H1 (cell line): ENCODE measurements at regions of chr1 and their contacts with region 1.

Region 1: DNA sequence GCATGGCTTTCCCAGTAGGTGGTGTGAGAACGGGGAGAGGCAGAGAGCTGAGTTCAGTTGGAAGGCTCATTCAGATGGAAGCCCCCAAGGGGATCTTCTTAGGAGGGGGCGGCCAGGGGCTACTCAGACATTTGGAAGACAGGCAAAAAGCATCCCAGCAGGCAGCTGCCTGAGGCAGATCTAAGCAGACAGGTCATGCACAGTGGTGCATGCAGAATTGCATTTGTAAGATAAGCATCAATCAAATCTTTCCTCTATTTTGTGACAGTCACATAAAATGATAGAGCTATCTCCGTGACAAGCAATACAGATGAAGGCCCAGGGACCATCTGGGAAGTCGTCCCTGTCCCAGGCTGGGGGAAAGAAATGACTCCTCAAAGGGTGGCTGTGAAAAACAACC is 3.8 kb downstream of the RAB3B start:
- DNase-seq: no peak
- H3K4me3 ChIP-seq: no peak overlapping the region
- H3K27ac ChIP-seq: no peak overlapping the region
- H3K4me1 ChIP-seq: peaks cover 1 to 9% (median 6%) of the 10 kb centered on the region in 4 experiments; a peak in 6 of 7 replicates
- H3K27me3 ChIP-seq: no peaks in the 10 kb centered on the region; a peak in 1 of 7 replicates
- CTCF ChIP-seq: no peak
- EP300 ChIP-seq: no peak
- POLR2A ChIP-seq: no peak
- RAD21 ChIP-seq: no peak

Region 2: DNA sequence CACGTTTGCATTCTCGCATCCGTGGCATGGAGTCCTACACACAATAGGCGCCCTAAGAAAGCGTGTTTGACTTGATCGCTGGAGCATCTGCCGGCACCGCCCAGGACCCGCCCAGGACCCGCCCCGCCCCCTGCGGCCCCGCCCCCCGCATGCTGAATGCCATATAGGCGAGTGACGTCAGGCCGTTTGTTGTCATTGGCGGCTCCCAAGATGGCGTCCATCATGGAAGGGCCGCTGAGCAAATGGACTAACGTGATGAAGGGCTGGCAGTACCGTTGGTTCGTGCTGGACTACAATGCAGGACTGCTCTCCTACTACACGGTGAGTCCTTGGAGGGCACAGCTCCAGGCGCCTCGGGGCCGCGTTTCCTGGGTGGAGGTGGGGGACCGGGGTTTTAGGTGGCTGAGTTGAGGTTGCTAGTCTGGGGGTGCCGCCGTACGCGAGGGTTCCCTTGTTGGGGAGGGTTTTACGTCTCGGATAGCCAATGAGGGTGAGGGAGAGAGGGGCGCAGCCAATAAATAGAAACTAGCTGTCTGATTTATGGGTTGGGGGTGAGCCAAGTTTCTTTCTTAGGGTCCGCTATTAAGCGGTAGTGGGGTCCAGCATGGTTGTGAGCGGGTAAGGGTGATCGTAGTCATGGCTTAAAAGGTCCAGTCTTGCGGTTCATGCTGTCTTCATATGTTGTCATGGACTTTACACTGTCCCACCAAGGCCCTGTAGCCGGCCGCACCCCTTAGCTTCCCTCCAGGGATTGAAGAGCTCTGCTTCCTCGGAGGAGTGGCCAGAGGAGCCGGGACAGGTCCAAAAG is 369.6 kb before region 1 on chr1 and contains the start of gene OSBPL9:
- CTCF ChIA-PET with region 1: no interaction called
- POLR2A ChIA-PET with region 1: no interaction called
- DNase-seq: peak; percentile 39 to 90
- H3K4me3 ChIP-seq: peak within 1 kb of the TSS; percentile 96 to 100 (median 100)
- H3K27ac ChIP-seq: peak within 1 kb of the TSS; percentile 97
- H3K4me1 ChIP-seq: peaks cover 0 to 3% (median 1%) of the 10 kb centered on the region in 4 experiments; a peak in 2 of 7 replicates
- H3K27me3 ChIP-seq: no peaks in the 10 kb centered on the region
- CTCF ChIP-seq: no peak
- EP300 ChIP-seq: no peak
- POLR2A ChIP-seq: peak; percentile 88 to 96
- RAD21 ChIP-seq: no peak
- total RNA-seq, gene OSBPL9: 62.3 and 71.6 TPM in 2 replicates

Region 3: DNA sequence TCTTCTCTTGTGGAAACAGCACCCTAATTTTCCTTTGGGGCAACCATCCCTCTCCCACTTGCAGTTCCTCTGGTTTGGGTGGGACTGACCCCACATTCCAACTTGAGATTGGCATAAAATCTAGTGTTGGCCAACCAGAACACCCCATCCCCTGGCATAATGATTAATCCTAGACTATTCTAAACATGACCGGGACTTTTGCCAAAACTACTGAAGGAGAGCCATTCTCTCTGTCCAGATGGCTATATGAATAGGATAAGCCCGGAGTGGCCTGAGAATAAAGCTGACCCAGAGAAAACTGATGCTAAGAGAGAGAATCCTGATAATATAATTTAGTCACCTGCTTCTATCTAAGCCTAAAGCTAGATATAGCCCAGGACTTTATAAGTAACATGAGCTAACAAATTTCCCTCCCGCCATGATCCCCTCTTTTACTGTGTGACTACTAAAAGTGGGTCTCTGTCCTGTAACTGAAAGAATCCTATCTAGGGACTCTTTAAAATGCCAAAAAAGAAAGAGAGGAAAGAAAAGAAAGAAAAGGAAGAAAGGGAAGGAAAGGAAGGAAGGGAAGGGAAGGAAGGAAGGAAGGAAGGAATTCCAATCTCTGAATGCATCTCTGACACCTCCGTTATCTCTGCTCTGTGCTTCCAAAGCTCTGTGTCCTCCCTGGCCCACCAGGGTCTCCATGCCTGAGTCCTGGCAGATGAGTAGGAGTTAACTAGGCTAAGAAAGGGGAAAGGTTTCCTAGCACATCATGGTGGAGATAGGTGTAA is 80.2 kb before region 1 on chr1:
- CTCF ChIA-PET with region 1: no interaction called
- POLR2A ChIA-PET with region 1: no interaction called
- DNase-seq: no peak
- H3K4me3 ChIP-seq: no peak overlapping the region
- H3K27ac ChIP-seq: no peak overlapping the region
- H3K4me1 ChIP-seq: peaks cover 2 to 16% (median 8%) of the 10 kb centered on the region in 4 experiments; a peak in 4 of 7 replicates
- H3K27me3 ChIP-seq: no peaks in the 10 kb centered on the region
- CTCF ChIP-seq: no peak
- EP300 ChIP-seq: no peak
- POLR2A ChIP-seq: no peak
- RAD21 ChIP-seq: no peak

Region 4: GRCh38 chr1:52002038-52002917 is 15.6 kb after region 1 on chr1:
- CTCF ChIA-PET with region 1: interaction called, 6 read pairs
- POLR2A ChIA-PET with region 1: interaction called, 10 read pairs
- DNase-seq: peak in 1 of 2 experiments; percentile 65
- H3K4me3 ChIP-seq: no peak overlapping the region
- H3K27ac ChIP-seq: no peak overlapping the region
- H3K4me1 ChIP-seq: peaks cover 9 to 19% (median 18%) of the 10 kb centered on the region in 4 experiments; a peak in 6 of 7 replicates
- H3K27me3 ChIP-seq: no peaks in the 10 kb centered on the region; a peak in 1 of 7 replicates
- CTCF ChIP-seq: peak; percentile 48 to 98 (median 83)
- EP300 ChIP-seq: no peak
- POLR2A ChIP-seq: no peak
- RAD21 ChIP-seq: peak; percentile 99